Activated CD4-positive, alpha-beta T cell treated with anti-CD3 and anti-CD28 coated beads for 36 hours (primary cell): ENCODE measurements at regions of chrX and their contacts with region 1.

Region 1: DNA sequence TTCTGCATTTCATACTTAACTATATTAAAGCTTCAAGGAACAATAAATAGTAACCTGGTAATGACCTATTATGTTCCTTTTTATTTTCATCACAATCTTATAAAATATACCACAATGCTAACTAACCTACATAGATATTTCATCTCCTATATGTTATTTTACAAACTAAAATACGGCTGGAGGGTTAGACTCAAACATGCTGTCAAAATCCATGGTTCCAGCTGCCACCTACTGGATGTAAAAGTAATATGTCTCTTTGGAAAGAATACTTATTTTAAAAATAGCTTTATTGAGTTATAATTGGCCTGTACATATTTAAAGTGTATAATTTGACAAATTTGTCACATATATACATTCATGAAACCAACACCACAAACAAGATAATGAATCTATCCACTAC is 15.0 kb downstream of the RGN start:
- DNase-seq: peak; percentile 10
- ATAC-seq: no peak
- H3K4me3 Mint-ChIP-seq: no peak overlapping the region
- H3K27ac Mint-ChIP-seq: no peak overlapping the region
- H3K4me1 Mint-ChIP-seq: peaks cover 10% of the 10 kb centered on the region
- H3K27me3 Mint-ChIP-seq: no peaks in the 10 kb centered on the region

Region 2: GRCh38 chrX:46903458-46904242 is 189.6 kb before region 1 on chrX:
- CTCF ChIA-PET with region 1: interaction called, 3 read pairs
- POLR2A ChIA-PET with region 1: interaction called, 3 read pairs
- intact Hi-C with region 1: loop called in 1 of 2 experiments (anchors 5 kb)
- DNase-seq: peak; percentile 73
- ATAC-seq: peak; percentile 98
- H3K4me3 Mint-ChIP-seq: peak overlapping the region; percentile 46
- H3K27ac Mint-ChIP-seq: no peak overlapping the region
- H3K4me1 Mint-ChIP-seq: peaks cover 2% of the 10 kb centered on the region
- H3K27me3 Mint-ChIP-seq: peaks cover 3% of the 10 kb centered on the region

Region 3: GRCh38 chrX:46912098-46912602 is 181.1 kb before region 1 on chrX and contains the start of gene JADE3:
- CTCF ChIA-PET with region 1: interaction called, 3 read pairs
- POLR2A ChIA-PET with region 1: interaction called, 3 read pairs
- intact Hi-C with region 1: loop called in 1 of 2 experiments (anchors 5 kb)
- DNase-seq: peak; percentile 47
- ATAC-seq: peak; percentile 24
- H3K4me3 Mint-ChIP-seq: peak within 1 kb of the TSS; percentile 71
- H3K27ac Mint-ChIP-seq: no peak within 1 kb of the TSS
- H3K4me1 Mint-ChIP-seq: peaks cover 10% of the 10 kb centered on the region
- H3K27me3 Mint-ChIP-seq: peaks cover 31% of the 10 kb centered on the region
- total RNA-seq, gene JADE3: 1.5 to 2.7 TPM

Region 4: GRCh38 chrX:47030339-47030738 is 62.9 kb before region 1 on chrX:
- CTCF ChIA-PET with region 1: interaction called, 6 read pairs
- POLR2A ChIA-PET with region 1: no interaction called
- intact Hi-C with region 1: loop called in 1 of 2 experiments (anchors 2 kb)
- DNase-seq: peak; percentile 3
- ATAC-seq: no peak
- H3K4me3 Mint-ChIP-seq: no peak overlapping the region
- H3K27ac Mint-ChIP-seq: no peak overlapping the region
- H3K4me1 Mint-ChIP-seq: no peaks in the 10 kb centered on the region
- H3K27me3 Mint-ChIP-seq: no peaks in the 10 kb centered on the region

Region 5: DNA sequence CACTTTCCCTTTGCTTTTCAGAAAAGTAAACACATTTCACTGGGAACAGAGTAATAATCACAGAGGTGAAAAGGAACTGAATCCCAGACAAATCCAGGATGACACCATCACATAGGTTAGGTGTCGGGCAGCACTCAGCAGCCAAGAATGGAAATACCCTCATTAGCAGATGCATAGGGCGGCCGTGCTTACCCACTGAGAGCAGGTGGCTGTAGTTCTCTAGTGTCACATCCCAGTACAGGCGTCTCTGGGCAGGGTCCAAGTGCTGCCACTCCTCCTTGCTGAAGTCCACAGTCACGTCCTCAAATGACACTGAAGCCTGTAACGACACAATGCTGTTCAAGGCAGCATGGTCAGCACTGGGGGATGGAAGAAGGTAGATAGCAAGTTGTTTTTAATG is 362.8 kb after region 1 on chrX:
- CTCF ChIA-PET with region 1: no interaction called
- POLR2A ChIA-PET with region 1: no interaction called
- intact Hi-C with region 1: no loop called
- DNase-seq: no peak
- ATAC-seq: no peak
- H3K4me3 Mint-ChIP-seq: no peak overlapping the region
- H3K27ac Mint-ChIP-seq: no peak overlapping the region
- H3K4me1 Mint-ChIP-seq: no peaks in the 10 kb centered on the region
- H3K27me3 Mint-ChIP-seq: no peaks in the 10 kb centered on the region